PC-3 (cell line): ENCODE measurements at regions of chr7 and their contacts with region 1.

Region 1: GRCh38 chr7:81013083-81013817 is 94.4 kb upstream of the SEMA3C start:
- DNase-seq: peak; percentile 71
- ATAC-seq: peak; percentile 93
- H3K4me3 ChIP-seq: no peak overlapping the region
- H3K27ac ChIP-seq: peak overlapping the region; percentile 76
- H3K4me1 ChIP-seq: peaks cover 24% of the 10 kb centered on the region
- H3K27me3 ChIP-seq: no peaks in the 10 kb centered on the region
- CTCF ChIP-seq: no peak

Region 2: DNA sequence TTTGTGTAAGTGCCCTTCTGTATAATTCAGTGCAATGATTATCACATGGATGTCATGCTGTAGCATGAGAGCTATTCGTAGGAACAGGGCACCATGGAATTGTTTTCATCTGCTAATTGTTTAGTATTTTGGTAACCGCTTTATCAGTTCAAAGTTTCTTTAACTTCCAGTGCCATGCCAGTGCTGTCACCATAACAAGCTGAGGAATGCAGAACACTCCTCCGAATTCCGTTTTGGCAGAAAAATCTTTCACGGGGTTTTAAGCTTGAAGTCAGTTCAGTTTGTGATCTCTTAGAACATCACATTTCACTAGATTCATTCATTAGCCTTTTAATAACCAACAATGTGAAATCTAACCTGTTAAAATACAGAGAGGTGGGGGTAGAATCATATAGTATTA is 22.8 kb after region 1 on chr7:
- CTCF ChIA-PET with region 1: no interaction called
- POLR2A ChIA-PET with region 1: interaction called, 25 read pairs
- intact Hi-C with region 1: no loop called
- DNase-seq: no peak
- ATAC-seq: no peak
- H3K4me3 ChIP-seq: no peak overlapping the region
- H3K27ac ChIP-seq: no peak overlapping the region
- H3K4me1 ChIP-seq: no peaks in the 10 kb centered on the region
- H3K27me3 ChIP-seq: no peaks in the 10 kb centered on the region
- CTCF ChIP-seq: no peak

Region 3: GRCh38 chr7:81298951-81299669 is 285.9 kb after region 1 on chr7:
- CTCF ChIA-PET with region 1: no interaction called
- POLR2A ChIA-PET with region 1: no interaction called
- intact Hi-C with region 1: loop called (anchors 5 kb)
- DNase-seq: peak; percentile 89
- ATAC-seq: peak; percentile 99
- H3K4me3 ChIP-seq: peak overlapping the region; percentile 8; the same call in 1 of the 2 replicates
- H3K27ac ChIP-seq: peak overlapping the region; percentile 57
- H3K4me1 ChIP-seq: peaks cover 29% of the 10 kb centered on the region
- H3K27me3 ChIP-seq: no peaks in the 10 kb centered on the region
- CTCF ChIP-seq: no peak